Natural killer cell (primary cell): ENCODE measurements at regions of chr5 and their contacts with region 1.

Region 1: GRCh38 chr5:180291943-180292831 is at the start of gene MAPK9:
- DNase-seq: peak; percentile 85 to 93
- ATAC-seq: peak; percentile 74 to 88 (median 82)
- H3K4me3 ChIP-seq: peak within 1 kb of the TSS; percentile 56
- H3K4me3 Mint-ChIP-seq: peak within 1 kb of the TSS; percentile 97
- H3K27ac ChIP-seq: peak within 1 kb of the TSS; percentile 78
- H3K27ac Mint-ChIP-seq: peak within 1 kb of the TSS; percentile 95 to 98
- H3K4me1 ChIP-seq: peaks cover 32% of the 10 kb centered on the region
- H3K4me1 Mint-ChIP-seq: peaks cover 33 to 45% of the 10 kb centered on the region in 2 donors
- H3K27me3 ChIP-seq: no peaks in the 10 kb centered on the region
- H3K27me3 Mint-ChIP-seq: no peaks in the 10 kb centered on the region
- CTCF ChIP-seq: no peak
- total RNA-seq, gene MAPK9: 34.1 to 48.5 (median 40.4) TPM

Region 2: DNA sequence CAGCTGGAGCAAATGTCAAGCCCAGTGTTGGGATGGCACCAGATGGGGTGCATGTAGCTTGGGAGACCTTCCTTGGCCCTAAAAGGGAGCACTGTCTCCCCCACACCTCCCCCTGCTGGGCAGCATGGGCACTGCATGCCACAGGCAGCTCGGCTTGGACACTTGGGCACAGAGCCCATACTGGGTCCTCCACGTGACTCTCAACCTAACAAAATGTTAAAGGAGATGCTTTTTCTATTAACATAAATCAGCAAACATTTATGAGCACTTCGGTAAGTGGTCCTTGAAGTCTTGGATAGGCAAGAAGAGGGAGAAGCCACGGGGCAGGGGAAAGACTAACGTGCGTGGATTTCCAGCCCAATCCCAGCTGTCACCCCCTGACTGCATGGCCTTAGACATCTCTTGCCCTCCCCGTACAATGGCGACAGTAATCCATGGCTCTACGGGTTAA is 23.6 kb after region 1 on chr5:
- intact Hi-C with region 1: loop called (anchors 1 kb)
- DNase-seq: peak; percentile 74 to 85
- ATAC-seq: peak; percentile 64 to 85 (median 84)
- H3K4me3 ChIP-seq: no peak overlapping the region
- H3K4me3 Mint-ChIP-seq: no peak overlapping the region
- H3K27ac ChIP-seq: no peak overlapping the region
- H3K27ac Mint-ChIP-seq: no peak overlapping the region
- H3K4me1 ChIP-seq: no peaks in the 10 kb centered on the region
- H3K4me1 Mint-ChIP-seq: no peaks in the 10 kb centered on the region
- H3K27me3 ChIP-seq: no peaks in the 10 kb centered on the region
- H3K27me3 Mint-ChIP-seq: peaks cover 0 to 10% of the 10 kb centered on the region in 2 donors
- CTCF ChIP-seq: peak; percentile 96

Region 3: DNA sequence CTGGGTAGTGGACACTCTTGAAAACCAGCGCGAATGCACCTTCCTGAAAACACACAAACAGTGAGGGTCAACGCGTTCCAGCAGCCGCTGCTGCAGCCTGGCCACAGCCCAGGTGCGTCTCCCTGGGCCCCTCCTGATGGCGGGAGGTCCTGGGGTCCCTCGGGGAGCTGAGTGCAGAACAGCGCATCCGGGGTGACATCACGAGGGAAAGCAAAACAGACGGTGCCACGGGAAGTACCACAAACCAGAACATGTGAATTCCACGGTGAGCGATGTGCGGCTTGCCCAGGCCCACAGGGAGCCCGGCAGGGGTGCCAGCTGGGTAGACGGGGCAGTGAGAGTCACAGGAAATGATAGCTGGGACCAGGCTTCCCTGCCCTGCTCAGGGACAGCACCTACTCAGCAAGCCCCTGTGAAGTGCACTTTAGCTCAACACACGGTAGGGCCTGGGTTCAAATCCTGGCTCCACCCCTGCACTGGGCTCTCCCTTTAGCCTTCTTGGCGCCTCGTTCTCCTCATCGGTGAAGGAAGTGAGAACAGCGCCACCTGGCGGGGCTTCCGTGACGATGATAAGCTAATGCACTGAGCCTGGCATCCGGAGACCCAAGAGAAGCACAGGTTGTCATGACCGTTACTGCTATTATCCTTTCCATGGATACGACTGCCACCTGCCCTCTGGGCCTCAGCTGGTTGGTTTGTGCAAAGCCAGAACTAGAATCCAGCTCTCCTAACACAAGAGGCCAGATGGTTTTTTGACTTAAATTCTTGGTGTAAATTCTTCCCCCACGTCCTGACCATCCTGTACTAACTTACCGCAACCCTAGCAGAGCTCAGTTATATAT is 36.3 kb after region 1 on chr5:
- intact Hi-C with region 1: loop called (anchors 1 kb)
- DNase-seq: peak; percentile 77 to 93
- ATAC-seq: peak; percentile 69 to 97 (median 96)
- H3K4me3 ChIP-seq: no peak overlapping the region
- H3K4me3 Mint-ChIP-seq: no peak overlapping the region
- H3K27ac ChIP-seq: no peak overlapping the region
- H3K27ac Mint-ChIP-seq: no peak overlapping the region
- H3K4me1 ChIP-seq: peaks cover 4% of the 10 kb centered on the region
- H3K4me1 Mint-ChIP-seq: no peaks in the 10 kb centered on the region
- H3K27me3 ChIP-seq: no peaks in the 10 kb centered on the region
- H3K27me3 Mint-ChIP-seq: peaks cover 20 to 36% of the 10 kb centered on the region in 2 donors
- CTCF ChIP-seq: peak; percentile 84

Region 4: DNA sequence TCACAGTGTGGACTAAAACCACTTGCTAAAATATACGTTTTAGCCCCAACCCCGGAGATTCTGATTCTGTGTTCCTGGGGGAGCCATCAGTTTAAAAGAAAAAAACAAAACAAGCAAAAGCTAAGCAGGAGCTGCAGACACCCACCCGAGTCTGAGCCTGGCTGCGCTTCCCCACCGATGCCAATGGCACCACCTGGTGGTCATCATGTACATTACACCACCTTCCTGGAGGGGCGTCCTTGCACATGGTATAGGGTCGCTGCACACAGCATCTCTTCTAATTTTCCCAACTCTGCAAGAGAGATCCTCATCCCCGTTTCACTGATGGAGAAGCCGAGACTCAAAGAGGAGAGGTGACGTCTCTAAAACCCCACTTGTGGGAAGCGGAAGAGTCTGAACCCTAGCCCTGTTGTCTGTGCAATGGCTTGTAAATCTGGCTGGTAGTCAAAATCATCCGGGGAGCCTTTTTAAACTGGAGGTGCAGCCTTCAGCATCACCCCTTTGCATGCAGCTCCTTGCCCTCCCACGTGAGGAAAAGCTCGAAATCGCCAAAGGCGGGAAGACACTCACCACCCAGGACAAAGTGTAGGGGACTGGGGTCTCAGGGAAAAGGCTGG is 178.9 kb after region 1 on chr5:
- intact Hi-C with region 1: loop called (anchors 1 kb)
- DNase-seq: peak; percentile 47 to 84
- ATAC-seq: peak; percentile 82 to 96 (median 95)
- H3K4me3 ChIP-seq: no peak overlapping the region
- H3K4me3 Mint-ChIP-seq: no peak overlapping the region
- H3K27ac ChIP-seq: no peak overlapping the region
- H3K27ac Mint-ChIP-seq: no peak overlapping the region
- H3K4me1 ChIP-seq: peaks cover 5% of the 10 kb centered on the region
- H3K4me1 Mint-ChIP-seq: no peaks in the 10 kb centered on the region
- H3K27me3 ChIP-seq: no peaks in the 10 kb centered on the region
- H3K27me3 Mint-ChIP-seq: peaks cover 7 to 10% of the 10 kb centered on the region in 2 donors
- CTCF ChIP-seq: peak; percentile 97